ENCODE measurements at regions of chr1 and their contacts with region 1.

Region 1: GRCh38 chr1:84143796-84144565 is at the start of gene PRKACB:
- DNase-seq: no peak
- ATAC-seq: peak; percentile 35; the same call in 1 of the 2 replicates
- H3K4me3 ChIP-seq: peak within 1 kb of the TSS; percentile 4 to 16; a peak in 2 of 4 replicates
- H3K27ac ChIP-seq: peak within 1 kb of the TSS; percentile 89
- H3K4me1 ChIP-seq: peaks cover 75 to 82% of the 10 kb centered on the region in 2 experiments
- H3K27me3 ChIP-seq: no peaks in the 10 kb centered on the region
- CTCF ChIP-seq: no peak
- POLR2A ChIP-seq: no peak
- RAD21 ChIP-seq: peak; percentile 27; the same call in 1 of the 2 replicates
- total RNA-seq, gene PRKACB: 135 TPM

Region 2: DNA sequence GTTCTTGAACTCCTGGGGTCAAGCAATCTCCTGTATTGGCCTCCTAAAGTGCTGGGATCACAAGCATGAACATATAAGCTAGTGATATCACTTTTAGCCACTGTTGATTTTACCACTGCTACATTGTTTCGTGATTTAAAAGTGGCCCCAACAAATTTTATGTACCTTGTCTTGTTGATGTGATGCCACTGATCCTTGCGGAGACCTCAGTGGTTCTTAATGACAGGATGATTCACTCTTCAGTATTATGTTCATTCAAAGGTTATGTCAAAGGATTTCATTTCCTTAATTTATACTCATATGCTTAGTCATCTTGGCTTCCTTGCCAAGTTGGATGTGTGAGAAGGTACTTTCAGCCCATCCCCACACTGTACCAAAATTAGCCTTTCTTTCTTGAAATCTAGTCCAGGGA is 12.2 kb after region 1 on chr1:
- CTCF ChIA-PET with region 1: interaction called, 3 read pairs
- POLR2A ChIA-PET with region 1: interaction called, 19 read pairs
- RAD21 ChIA-PET with region 1: no interaction called
- intact Hi-C with region 1: loop called (anchors 1 kb)
- DNase-seq: peak; percentile 97
- ATAC-seq: peak; percentile 87
- H3K4me3 ChIP-seq: no peak overlapping the region
- H3K27ac ChIP-seq: peak overlapping the region; percentile 99
- H3K4me1 ChIP-seq: peaks cover 59 to 87% of the 10 kb centered on the region in 2 experiments
- H3K27me3 ChIP-seq: no peaks in the 10 kb centered on the region
- CTCF ChIP-seq: no peak
- POLR2A ChIP-seq: no peak
- RAD21 ChIP-seq: peak; percentile 55

Region 3: DNA sequence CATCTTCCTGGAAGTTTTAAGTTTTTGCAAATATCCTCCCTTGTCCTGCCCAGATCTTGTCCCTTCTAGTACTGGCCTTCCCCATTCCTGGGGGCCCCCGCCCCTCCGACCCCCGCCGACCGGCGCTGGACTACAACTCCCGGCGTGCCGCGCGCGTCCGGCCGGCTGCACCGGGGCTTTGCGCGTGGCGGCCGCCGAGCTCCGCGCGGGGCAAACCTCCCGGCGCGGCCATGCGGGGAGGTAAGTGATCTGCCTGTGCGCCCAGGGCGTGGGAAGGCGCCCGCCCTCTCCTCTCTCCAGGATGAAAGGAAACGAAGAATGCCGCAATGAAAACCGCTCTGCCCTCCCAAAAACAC is 154.3 kb after region 1 on chr1:
- CTCF ChIA-PET with region 1: interaction called, 3 read pairs
- POLR2A ChIA-PET with region 1: interaction called, 9 read pairs
- RAD21 ChIA-PET with region 1: interaction called in 1 of 2 experiments, 3 read pairs
- intact Hi-C with region 1: loop called (anchors 5 kb)
- DNase-seq: no peak
- ATAC-seq: peak; percentile 63
- H3K4me3 ChIP-seq: peak overlapping the region; percentile 70 to 74
- H3K27ac ChIP-seq: peak overlapping the region; percentile 93
- H3K4me1 ChIP-seq: peaks cover 29 to 55% of the 10 kb centered on the region in 2 experiments
- H3K27me3 ChIP-seq: no peaks in the 10 kb centered on the region
- CTCF ChIP-seq: no peak
- POLR2A ChIP-seq: no peak
- RAD21 ChIP-seq: no peak

Region 4: DNA sequence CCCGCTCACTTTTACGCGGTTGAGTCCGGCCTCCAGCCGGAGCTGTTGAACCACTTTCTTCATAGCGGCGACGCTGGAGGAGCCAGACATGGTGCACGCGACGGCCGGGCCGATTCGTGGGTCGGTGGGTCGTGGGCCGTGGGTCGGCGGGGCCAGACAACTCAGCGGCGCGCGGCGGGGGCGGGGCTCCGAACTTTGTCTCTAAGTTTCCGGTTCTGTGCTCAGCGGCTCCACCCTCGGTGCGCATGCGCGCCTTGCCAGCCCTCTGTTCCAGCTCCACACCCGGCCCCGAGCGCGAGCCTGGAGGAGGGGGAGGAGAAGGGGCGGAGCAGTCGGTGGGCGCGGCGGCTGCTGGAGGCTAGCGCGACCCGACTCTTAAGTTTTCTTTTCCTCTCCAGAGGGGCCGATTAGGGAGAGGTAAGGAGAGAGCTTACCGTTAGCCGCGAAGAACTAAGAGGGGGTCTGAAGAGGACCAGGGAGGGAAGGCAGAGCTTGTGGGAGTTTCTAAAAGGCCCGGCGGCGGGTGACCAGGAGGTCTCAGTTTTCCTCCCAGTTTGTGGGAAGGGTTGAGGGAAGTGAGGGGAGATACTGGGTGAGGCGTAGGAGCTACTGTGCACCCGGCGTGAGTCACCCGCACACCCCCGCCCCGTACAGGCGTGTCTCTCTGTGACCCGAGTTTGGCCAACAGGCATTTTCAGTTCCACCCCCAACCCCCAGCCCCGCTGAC is 362.2 kb after region 1 on chr1 and contains the starts of genes GNG5 and SPATA1:
- CTCF ChIA-PET with region 1: interaction called, 5 read pairs
- POLR2A ChIA-PET with region 1: interaction called, 12 read pairs
- RAD21 ChIA-PET with region 1: no interaction called
- intact Hi-C with region 1: loop called (anchors 5 kb)
- DNase-seq: peak; percentile 91
- ATAC-seq: peak; percentile 90
- H3K4me3 ChIP-seq: peak within 1 kb of the TSS; percentile 83 to 85
- H3K27ac ChIP-seq: peak within 1 kb of the TSS; percentile 83
- H3K4me1 ChIP-seq: peaks cover 21 to 38% of the 10 kb centered on the region in 2 experiments
- H3K27me3 ChIP-seq: no peaks in the 10 kb centered on the region
- CTCF ChIP-seq: no peak
- POLR2A ChIP-seq: no peak
- RAD21 ChIP-seq: no peak; the same call in 1 of the 2 replicates
- total RNA-seq, gene GNG5: 193 TPM
- total RNA-seq, gene SPATA1: 3.1 TPM

Region 5: GRCh38 chr1:84603941-84604830 is 460.2 kb after region 1 on chr1:
- CTCF ChIA-PET with region 1: interaction called, 27 read pairs
- POLR2A ChIA-PET with region 1: interaction called, 3 read pairs
- RAD21 ChIA-PET with region 1: interaction called, 5 to 7 read pairs
- intact Hi-C with region 1: loop called (anchors 1 kb)
- DNase-seq: peak; percentile 73
- ATAC-seq: peak; percentile 77
- H3K4me3 ChIP-seq: peak overlapping the region; percentile 24 to 52
- H3K27ac ChIP-seq: peak overlapping the region; percentile 69
- H3K4me1 ChIP-seq: peaks cover 32 to 52% of the 10 kb centered on the region in 2 experiments
- H3K27me3 ChIP-seq: no peaks in the 10 kb centered on the region
- CTCF ChIP-seq: peak; percentile 67 to 87 (median 81)
- POLR2A ChIP-seq: no peak
- RAD21 ChIP-seq: peak; percentile 96

Region 6: GRCh38 chr1:84772428-84772943 is 628.5 kb after region 1 on chr1:
- CTCF ChIA-PET with region 1: interaction called, 6 read pairs
- POLR2A ChIA-PET with region 1: no interaction called
- RAD21 ChIA-PET with region 1: no interaction called
- intact Hi-C with region 1: loop called (anchors 5 kb)
- DNase-seq: peak; percentile 78
- ATAC-seq: peak; percentile 91
- H3K4me3 ChIP-seq: no peak overlapping the region
- H3K27ac ChIP-seq: no peak overlapping the region
- H3K4me1 ChIP-seq: no peaks in the 10 kb centered on the region
- H3K27me3 ChIP-seq: no peaks in the 10 kb centered on the region
- CTCF ChIP-seq: peak; percentile 70 to 97 (median 94)
- POLR2A ChIP-seq: no peak
- RAD21 ChIP-seq: peak; percentile 91

Measured in HCT116 (cell line).